ENCODE measurements at regions of chr4 and their contacts with region 1.

Region 1: DNA sequence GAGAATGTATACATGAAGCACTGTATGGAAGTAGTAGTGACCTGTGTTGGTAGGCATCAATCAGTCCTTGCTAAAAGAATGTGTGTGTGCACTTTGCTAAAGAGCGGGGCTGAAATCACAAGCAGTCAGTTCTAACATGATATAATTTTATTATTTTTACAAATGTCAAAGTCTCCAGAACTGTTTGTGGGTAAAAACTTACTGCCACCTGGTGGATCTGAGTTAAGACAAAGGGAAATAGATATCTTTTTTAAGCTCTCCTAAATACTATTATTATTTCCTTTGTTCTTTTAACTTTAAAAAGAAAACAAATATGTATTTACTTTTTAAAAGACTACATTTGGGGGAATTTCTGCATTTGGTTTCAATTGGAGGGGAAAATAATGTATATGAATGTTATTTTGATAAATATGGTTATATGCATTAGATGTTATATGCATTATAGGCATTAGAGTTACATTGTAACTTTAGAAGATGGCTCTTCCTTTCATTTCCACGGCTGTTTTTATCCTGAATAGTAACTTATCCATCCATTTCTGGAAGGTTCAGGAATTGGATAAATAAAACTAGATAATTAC is 7.8 kb upstream of the CLOCK start:
- DNase-seq: no peak
- H3K4me3 ChIP-seq: no peak overlapping the region
- H3K27ac ChIP-seq: no peak overlapping the region
- H3K27me3 ChIP-seq: no peaks in the 10 kb centered on the region
- CTCF ChIP-seq: peak; percentile 62

Region 2: DNA sequence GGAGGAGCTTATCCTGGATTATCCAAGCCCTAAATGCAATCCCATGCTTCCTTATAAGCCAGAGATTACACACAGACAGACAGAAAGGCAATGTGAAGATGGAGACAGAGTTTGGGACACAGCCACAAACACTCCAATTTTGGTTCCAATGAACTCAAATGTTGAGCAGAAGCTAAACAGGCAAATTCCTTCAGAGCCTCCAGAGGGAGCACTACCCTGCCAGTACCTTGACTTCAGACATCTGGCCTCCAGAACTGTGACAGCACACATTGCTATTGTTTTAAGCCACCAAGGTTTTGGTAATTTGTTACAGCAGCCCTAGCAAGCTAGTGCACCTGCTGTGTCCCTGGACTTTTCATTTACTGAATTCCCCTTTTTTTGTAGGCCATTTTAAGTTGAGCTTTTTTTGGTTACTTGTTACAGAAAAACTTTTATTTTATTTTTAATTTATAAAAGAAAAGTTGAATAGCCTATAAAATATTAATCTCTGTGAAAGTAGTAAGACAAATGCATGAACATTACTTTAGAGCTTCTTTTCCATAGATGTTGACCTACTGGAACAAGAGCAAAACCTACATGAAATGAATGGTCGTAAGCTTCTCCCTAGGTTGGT is 241.9 kb before region 1 on chr4:
- CTCF ChIA-PET with region 1: interaction called, 10 read pairs
- POLR2A ChIA-PET with region 1: no interaction called
- DNase-seq: no peak
- H3K4me3 ChIP-seq: no peak overlapping the region
- H3K27ac ChIP-seq: no peak overlapping the region
- H3K27me3 ChIP-seq: peaks cover 2% of the 10 kb centered on the region
- CTCF ChIP-seq: peak; percentile 86

Region 3: GRCh38 chr4:55409468-55410171 is 144.9 kb before region 1 on chr4:
- CTCF ChIA-PET with region 1: interaction called, 13 read pairs
- POLR2A ChIA-PET with region 1: no interaction called
- DNase-seq: no peak
- H3K4me3 ChIP-seq: no peak overlapping the region
- H3K27ac ChIP-seq: no peak overlapping the region
- H3K27me3 ChIP-seq: no peaks in the 10 kb centered on the region
- CTCF ChIP-seq: no peak

Region 4: DNA sequence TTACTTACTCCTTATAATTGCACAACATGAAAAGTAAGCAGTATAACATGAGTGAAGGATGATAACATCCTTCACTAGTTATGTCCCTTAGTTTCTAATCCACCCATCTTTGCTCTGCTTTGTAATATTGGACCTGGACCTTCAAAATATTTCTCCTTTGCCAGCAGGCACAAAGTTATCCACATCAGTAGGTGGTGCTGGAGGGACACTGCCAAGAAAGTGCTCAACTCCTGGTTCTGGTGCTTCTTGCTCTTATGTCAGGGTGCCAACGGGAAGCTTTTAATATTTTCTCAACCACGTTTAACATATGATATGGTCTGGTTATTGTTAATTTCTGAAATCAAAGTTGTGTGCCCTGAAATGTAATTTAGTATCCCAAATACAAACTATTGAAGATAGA is 109.7 kb before region 1 on chr4:
- CTCF ChIA-PET with region 1: interaction called, 34 read pairs
- POLR2A ChIA-PET with region 1: no interaction called
- DNase-seq: no peak
- H3K4me3 ChIP-seq: no peak overlapping the region
- H3K27ac ChIP-seq: no peak overlapping the region
- H3K27me3 ChIP-seq: no peaks in the 10 kb centered on the region
- CTCF ChIP-seq: peak; percentile 53

Region 5: GRCh38 chr4:55468724-55469123 is 85.8 kb before region 1 on chr4:
- CTCF ChIA-PET with region 1: no interaction called
- POLR2A ChIA-PET with region 1: no interaction called
- DNase-seq: peak; percentile 16
- H3K4me3 ChIP-seq: no peak overlapping the region
- H3K27ac ChIP-seq: no peak overlapping the region
- H3K27me3 ChIP-seq: no peaks in the 10 kb centered on the region
- CTCF ChIP-seq: no peak

Region 6: GRCh38 chr4:55903577-55903976 is 349.0 kb after region 1 on chr4:
- CTCF ChIA-PET with region 1: no interaction called
- POLR2A ChIA-PET with region 1: no interaction called
- DNase-seq: no peak
- H3K4me3 ChIP-seq: no peak overlapping the region
- H3K27ac ChIP-seq: no peak overlapping the region
- H3K27me3 ChIP-seq: no peaks in the 10 kb centered on the region
- CTCF ChIP-seq: no peak